H1 (cell line): ENCODE measurements at regions of chr2 and their contacts with region 1.

Region 1: GRCh38 chr2:132670496-132671150 is 618 bp upstream of the LYPD1 start:
- DNase-seq: peak in 1 of 2 experiments; percentile 77
- H3K4me3 ChIP-seq: peak overlapping the region; percentile 44 to 71 (median 68)
- H3K27ac ChIP-seq: no peak overlapping the region
- H3K4me1 ChIP-seq: peaks cover 0 to 10% (median 3%) of the 10 kb centered on the region in 4 experiments; a peak in 5 of 7 replicates
- H3K27me3 ChIP-seq: peaks cover 14 to 51% (median 45%) of the 10 kb centered on the region in 4 experiments
- CTCF ChIP-seq: no peak
- EP300 ChIP-seq: no peak
- POLR2A ChIP-seq: no peak
- RAD21 ChIP-seq: no peak; a peak in 1 of 4 replicates

Region 2: GRCh38 chr2:132588576-132588975 is 82.0 kb before region 1 on chr2:
- CTCF ChIA-PET with region 1: no interaction called
- POLR2A ChIA-PET with region 1: no interaction called
- DNase-seq: peak in 1 of 2 experiments; percentile 22
- H3K4me3 ChIP-seq: no peak overlapping the region
- H3K27ac ChIP-seq: no peak overlapping the region
- H3K4me1 ChIP-seq: peaks cover 0 to 13% (median 2%) of the 10 kb centered on the region in 4 experiments; a peak in 3 of 7 replicates
- H3K27me3 ChIP-seq: no peaks in the 10 kb centered on the region
- CTCF ChIP-seq: no peak
- EP300 ChIP-seq: no peak
- POLR2A ChIP-seq: no peak
- RAD21 ChIP-seq: no peak

Region 3: GRCh38 chr2:132651115-132652045 is 19.2 kb before region 1 on chr2:
- CTCF ChIA-PET with region 1: interaction called, 45 read pairs
- POLR2A ChIA-PET with region 1: no interaction called
- DNase-seq: no peak
- H3K4me3 ChIP-seq: no peak overlapping the region
- H3K27ac ChIP-seq: no peak overlapping the region
- H3K4me1 ChIP-seq: no peaks in the 10 kb centered on the region; a peak in 1 of 7 replicates
- H3K27me3 ChIP-seq: no peaks in the 10 kb centered on the region
- CTCF ChIP-seq: peak in 2 of 3 experiments; percentile 50 to 59; a peak in 3 of 4 replicates
- EP300 ChIP-seq: no peak
- POLR2A ChIP-seq: no peak
- RAD21 ChIP-seq: peak; percentile 54 to 63

Region 4: GRCh38 chr2:132656266-132656975 is 14.2 kb before region 1 on chr2:
- CTCF ChIA-PET with region 1: interaction called, 45 read pairs
- POLR2A ChIA-PET with region 1: no interaction called
- DNase-seq: no peak
- H3K4me3 ChIP-seq: no peak overlapping the region
- H3K27ac ChIP-seq: no peak overlapping the region
- H3K4me1 ChIP-seq: peaks cover 0 to 3% (median 0%) of the 10 kb centered on the region in 4 experiments; a peak in 1 of 7 replicates
- H3K27me3 ChIP-seq: no peaks in the 10 kb centered on the region
- CTCF ChIP-seq: no peak
- EP300 ChIP-seq: no peak
- POLR2A ChIP-seq: no peak
- RAD21 ChIP-seq: no peak